ENCODE measurements at regions of chr6 and their contacts with region 1.

Region 1: GRCh38 chr6:116531675-116532570 is 13.6 kb downstream of the TRAPPC3L start:
- DNase-seq: peak; percentile 48
- ATAC-seq: peak; percentile 87 to 89

Region 2: GRCh38 chr6:116217069-116217468 is 314.9 kb before region 1 on chr6:
- intact Hi-C with region 1: loop called in 1 of 2 experiments (anchors 5 kb)
- DNase-seq: no peak
- ATAC-seq: peak; percentile 33 to 34

Region 3: GRCh38 chr6:116287689-116288282 is 244.1 kb before region 1 on chr6:
- intact Hi-C with region 1: loop called (anchors 5 to 10 kb)
- DNase-seq: no peak
- ATAC-seq: peak in 1 of 2 donors; percentile 71

Region 4: DNA sequence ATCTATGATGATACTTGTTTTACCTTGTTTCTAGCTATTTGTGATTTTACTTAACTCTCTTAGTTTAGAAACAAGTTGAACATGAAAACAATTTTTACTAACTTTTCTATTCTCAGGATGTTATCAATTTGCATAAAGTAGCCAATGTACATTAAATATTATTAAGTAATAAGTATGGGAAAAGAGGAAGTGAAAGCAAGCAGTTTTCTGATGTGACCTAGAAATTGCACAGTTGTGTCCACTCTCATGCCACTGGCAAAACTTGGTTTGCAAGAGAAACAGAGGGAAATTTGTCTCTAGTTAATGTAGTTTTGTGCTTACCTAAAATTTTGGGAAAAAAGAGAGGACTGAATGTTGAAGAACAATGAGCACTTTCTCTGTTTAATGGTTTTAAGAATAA is 232.9 kb before region 1 on chr6:
- intact Hi-C with region 1: loop called in 1 of 2 experiments (anchors 10 kb)
- DNase-seq: no peak
- ATAC-seq: no peak

Region 5: GRCh38 chr6:116444092-116444491 is 87.8 kb before region 1 on chr6:
- intact Hi-C with region 1: loop called in 1 of 2 experiments (anchors 10 kb)
- DNase-seq: no peak
- ATAC-seq: peak in 1 of 2 donors; percentile 66

Region 6: GRCh38 chr6:116561377-116562018 is 29.6 kb after region 1 on chr6:
- intact Hi-C with region 1: loop called in 1 of 2 experiments (anchors 1 kb)
- DNase-seq: peak; percentile 69
- ATAC-seq: peak; percentile 41 to 56

Region 7: DNA sequence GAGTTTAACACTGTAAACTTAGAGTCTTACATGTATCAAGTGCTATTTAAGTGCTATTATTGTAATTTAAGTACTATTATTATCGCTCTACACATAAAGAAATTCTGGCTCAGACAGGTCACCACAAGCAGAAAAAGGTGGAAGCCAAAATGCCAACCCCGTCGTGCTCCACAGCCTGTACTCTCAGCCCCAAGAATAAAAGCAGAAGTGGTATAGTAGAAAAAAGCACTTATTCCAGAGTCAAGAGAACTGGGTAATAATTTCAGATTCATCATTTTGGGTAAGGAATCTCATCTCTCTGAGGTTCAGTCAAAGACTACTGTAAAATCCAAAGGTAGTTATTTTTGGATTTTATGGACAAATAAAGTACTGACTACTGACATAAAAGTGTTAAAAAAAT is 135.7 kb after region 1 on chr6:
- intact Hi-C with region 1: no loop called
- DNase-seq: no peak
- ATAC-seq: no peak